ENCODE measurements at regions of chr14 and their contacts with region 1.

Region 1: DNA sequence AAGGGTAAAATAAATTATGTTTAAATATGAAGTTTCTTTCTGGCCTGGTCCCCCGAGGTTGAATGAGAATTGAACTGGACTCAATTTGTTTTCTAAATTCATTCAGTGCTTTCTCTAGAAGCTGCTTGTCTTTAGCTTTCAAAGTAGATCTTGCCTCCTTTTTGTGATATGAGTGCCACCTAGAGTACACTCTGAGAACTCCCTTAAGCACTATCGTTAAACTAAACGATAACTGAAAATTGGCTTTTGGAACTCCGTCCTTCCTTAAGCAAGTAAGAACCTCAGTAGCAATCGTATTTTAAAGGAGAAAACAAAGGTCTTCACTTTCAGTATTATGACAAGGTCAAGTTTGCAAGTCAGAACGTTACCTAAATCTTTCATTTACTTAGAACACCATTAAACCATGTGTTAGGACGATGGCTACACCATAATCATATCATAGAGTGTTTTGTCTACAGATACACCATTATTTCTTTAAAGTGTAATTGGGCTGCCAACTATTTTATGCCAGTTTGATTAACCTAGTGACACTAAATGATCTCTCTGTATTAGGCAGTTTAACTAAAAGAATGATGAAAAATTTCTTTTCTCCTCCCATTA is 364.8 kb downstream of the SNAPC1 start:
- DNase-seq: no peak
- ATAC-seq: peak; percentile 61
- H3K4me3 Mint-ChIP-seq: no peak overlapping the region
- H3K27ac Mint-ChIP-seq: no peak overlapping the region
- H3K4me1 Mint-ChIP-seq: no peaks in the 10 kb centered on the region
- H3K27me3 Mint-ChIP-seq: peaks cover 30% of the 10 kb centered on the region

Region 2: DNA sequence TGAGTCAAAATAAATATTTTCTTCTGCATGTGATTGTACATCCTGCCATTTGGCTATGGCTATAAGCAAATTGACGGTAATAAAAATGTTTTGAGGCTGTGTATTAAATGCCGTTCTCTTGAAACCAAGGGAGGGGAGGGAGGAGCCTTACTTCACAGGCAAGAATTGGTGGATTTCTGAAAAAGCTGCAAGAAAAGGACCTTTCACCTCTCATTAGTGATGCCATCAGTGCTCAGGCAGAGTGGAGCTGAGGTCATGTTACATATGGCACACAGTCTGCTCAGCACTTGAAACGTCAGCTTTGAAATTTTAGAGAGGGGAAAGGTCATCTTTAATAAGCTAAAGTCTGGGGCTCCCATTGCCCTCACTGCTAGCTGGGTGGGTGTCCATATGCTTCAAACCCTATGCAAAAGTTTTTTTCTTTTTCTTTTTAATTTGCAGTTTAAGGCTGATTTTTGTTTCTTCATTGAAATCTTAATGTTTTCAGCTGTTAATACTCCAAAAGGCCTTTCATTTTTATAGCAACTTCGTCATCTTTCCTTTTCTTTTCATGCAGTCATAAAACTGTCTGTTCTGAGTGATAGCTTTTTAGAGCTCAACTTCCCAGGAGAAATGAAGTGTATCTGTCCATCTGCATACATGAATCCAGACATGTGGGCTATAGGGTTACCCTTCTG is 1467.9 kb before region 1 on chr14:
- CTCF ChIA-PET with region 1: no interaction called
- POLR2A ChIA-PET with region 1: no interaction called
- intact Hi-C with region 1: no loop called
- DNase-seq: no peak
- ATAC-seq: no peak
- H3K4me3 Mint-ChIP-seq: no peak overlapping the region
- H3K27ac Mint-ChIP-seq: no peak overlapping the region
- H3K4me1 Mint-ChIP-seq: peaks cover 20% of the 10 kb centered on the region
- H3K27me3 Mint-ChIP-seq: peaks cover 75% of the 10 kb centered on the region

Region 3: DNA sequence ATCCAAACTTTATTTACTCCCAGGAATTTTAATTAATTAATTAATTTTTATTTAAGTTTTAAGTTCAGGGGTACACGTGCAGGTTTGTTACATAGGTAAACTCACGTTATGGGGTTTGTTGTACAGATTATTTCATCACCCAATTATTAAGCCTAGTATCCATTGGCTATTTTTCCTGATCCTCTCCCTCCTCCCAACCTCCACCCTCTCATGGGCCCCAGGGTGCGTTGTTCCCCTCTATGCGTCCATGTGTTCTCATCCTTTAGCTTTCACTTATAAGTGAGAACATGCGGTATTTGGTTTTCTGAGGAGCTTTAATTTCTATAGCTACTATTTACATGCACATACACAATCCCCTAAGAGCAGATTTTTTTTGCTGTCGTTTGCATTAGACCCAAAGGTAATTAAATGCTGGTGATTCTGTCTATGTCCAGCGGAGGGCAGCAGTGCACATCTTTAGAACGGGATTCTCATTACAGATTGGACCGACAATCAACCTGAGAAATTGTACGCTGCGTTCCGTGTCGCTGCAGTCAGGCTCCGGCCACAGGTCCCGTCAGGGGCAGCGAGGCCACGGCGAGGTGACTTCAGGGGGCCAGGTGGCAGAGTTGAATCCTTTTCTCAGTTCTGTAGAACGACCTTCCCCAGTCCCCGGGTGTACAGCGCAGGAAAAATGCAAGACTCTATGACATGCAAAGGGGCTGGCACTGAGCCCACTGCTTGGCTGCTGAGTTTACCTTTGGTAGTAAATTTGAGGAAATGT is 857.5 kb before region 1 on chr14:
- CTCF ChIA-PET with region 1: interaction called, 3 read pairs
- POLR2A ChIA-PET with region 1: no interaction called
- intact Hi-C with region 1: loop called in 1 of 2 experiments (anchors 2 kb)
- DNase-seq: peak; percentile 85
- ATAC-seq: peak; percentile 95
- H3K4me3 Mint-ChIP-seq: peak overlapping the region; percentile 48
- H3K27ac Mint-ChIP-seq: no peak overlapping the region
- H3K4me1 Mint-ChIP-seq: peaks cover 2% of the 10 kb centered on the region
- H3K27me3 Mint-ChIP-seq: peaks cover 30% of the 10 kb centered on the region

Region 4: DNA sequence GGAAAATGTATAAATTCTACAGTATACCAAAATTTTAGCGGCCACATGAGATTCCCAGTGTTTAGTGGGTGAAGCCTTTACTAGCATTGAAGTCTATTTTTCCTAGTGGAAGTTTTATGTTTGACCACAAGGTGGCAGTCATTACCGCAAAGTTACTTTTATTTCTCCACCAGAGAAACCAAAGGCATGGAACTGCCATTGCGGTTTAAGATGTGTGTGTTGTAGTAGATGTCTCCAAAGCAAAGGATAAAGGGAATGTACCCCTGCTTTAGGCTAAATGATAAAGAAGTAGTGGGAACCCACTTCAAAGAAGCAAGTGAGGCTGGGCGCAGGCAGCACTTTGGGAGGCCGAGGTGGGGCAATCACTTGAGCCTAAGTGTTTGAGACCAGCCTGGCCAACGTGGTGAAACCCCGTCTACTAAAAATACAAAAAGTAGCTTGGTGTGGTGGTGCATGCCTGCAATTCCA is 665.1 kb before region 1 on chr14:
- CTCF ChIA-PET with region 1: no interaction called
- POLR2A ChIA-PET with region 1: no interaction called
- intact Hi-C with region 1: loop called (anchors 2 to 5 kb)
- DNase-seq: peak; percentile 51
- ATAC-seq: peak; percentile 45
- H3K4me3 Mint-ChIP-seq: no peak overlapping the region
- H3K27ac Mint-ChIP-seq: peak overlapping the region; percentile 92
- H3K4me1 Mint-ChIP-seq: peaks cover 77% of the 10 kb centered on the region
- H3K27me3 Mint-ChIP-seq: no peaks in the 10 kb centered on the region

Region 5: GRCh38 chr14:61894452-61895077 is 232.4 kb before region 1 on chr14:
- CTCF ChIA-PET with region 1: interaction called, 54 read pairs
- POLR2A ChIA-PET with region 1: no interaction called
- intact Hi-C with region 1: loop called (anchors 1 kb)
- DNase-seq: peak; percentile 83
- ATAC-seq: no peak
- H3K4me3 Mint-ChIP-seq: no peak overlapping the region
- H3K27ac Mint-ChIP-seq: no peak overlapping the region
- H3K4me1 Mint-ChIP-seq: peaks cover 14% of the 10 kb centered on the region
- H3K27me3 Mint-ChIP-seq: peaks cover 2% of the 10 kb centered on the region

Region 6: GRCh38 chr14:61925043-61925442 is 201.9 kb before region 1 on chr14:
- CTCF ChIA-PET with region 1: interaction called, 22 read pairs
- POLR2A ChIA-PET with region 1: no interaction called
- intact Hi-C with region 1: loop called (anchors 1 kb)
- DNase-seq: peak; percentile 24
- ATAC-seq: no peak
- H3K4me3 Mint-ChIP-seq: no peak overlapping the region
- H3K27ac Mint-ChIP-seq: no peak overlapping the region
- H3K4me1 Mint-ChIP-seq: no peaks in the 10 kb centered on the region
- H3K27me3 Mint-ChIP-seq: peaks cover 27% of the 10 kb centered on the region

Region 7: DNA sequence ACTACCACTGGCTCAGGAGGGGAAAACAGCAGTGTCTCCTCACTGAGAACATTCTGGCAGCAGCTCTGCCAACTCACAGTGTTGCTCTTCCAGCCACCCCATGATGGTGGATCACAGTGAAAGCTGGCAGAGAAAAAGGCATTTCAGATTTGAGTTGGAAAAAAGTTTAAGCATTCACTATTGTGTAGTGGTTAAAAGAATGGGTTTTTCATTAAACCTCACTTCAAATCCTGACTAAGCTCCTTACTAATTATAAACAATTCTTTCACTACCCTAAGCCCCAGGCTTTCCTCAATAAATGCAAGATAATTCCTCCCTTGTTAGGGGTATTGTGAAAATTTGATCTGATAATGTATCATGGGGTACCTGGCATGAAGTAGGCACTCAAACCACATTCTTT is 153.4 kb after region 1 on chr14:
- CTCF ChIA-PET with region 1: no interaction called
- POLR2A ChIA-PET with region 1: no interaction called
- intact Hi-C with region 1: no loop called
- DNase-seq: no peak
- ATAC-seq: no peak
- H3K4me3 Mint-ChIP-seq: no peak overlapping the region
- H3K27ac Mint-ChIP-seq: no peak overlapping the region
- H3K4me1 Mint-ChIP-seq: no peaks in the 10 kb centered on the region
- H3K27me3 Mint-ChIP-seq: peaks cover 2% of the 10 kb centered on the region